A673 (cell line): ENCODE measurements at regions of chr16 and their contacts with region 1.

Region 1: DNA sequence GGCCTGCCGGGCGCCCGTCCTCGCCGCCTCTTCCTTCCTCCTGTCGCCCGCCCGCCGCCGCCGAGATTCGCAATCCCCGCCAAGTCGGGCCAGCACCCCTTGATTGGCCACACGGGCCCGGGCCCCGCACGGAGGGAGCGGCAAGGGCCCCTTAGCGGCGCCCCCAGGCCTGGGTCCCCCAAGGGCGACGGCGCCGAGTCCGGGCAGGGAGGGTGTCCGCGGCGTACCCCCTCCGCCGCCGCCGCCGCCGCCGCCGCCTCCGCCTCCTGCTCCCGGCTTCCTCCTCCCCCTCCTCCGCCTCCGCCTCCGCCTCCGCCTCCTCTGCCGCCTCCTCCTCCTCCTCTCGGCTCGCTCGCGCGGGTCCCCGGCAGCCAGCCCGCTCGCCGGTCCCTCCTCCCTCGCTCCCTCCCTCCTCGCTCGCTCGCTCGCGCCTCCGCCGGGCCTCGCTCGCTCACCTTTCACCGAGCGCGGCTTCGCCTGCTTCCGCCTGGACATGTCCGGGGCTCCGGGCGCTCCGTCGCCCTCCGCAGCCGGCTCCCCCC is 561 bp downstream of the ZNF423 start:
- DNase-seq: peak; percentile 87
- H3K4me3 ChIP-seq: peak overlapping the region; percentile 77
- H3K27ac ChIP-seq: peak overlapping the region; percentile 79
- H3K4me1 ChIP-seq: peaks cover 32% of the 10 kb centered on the region
- H3K27me3 ChIP-seq: no peaks in the 10 kb centered on the region
- CTCF ChIP-seq: no peak

Region 2: DNA sequence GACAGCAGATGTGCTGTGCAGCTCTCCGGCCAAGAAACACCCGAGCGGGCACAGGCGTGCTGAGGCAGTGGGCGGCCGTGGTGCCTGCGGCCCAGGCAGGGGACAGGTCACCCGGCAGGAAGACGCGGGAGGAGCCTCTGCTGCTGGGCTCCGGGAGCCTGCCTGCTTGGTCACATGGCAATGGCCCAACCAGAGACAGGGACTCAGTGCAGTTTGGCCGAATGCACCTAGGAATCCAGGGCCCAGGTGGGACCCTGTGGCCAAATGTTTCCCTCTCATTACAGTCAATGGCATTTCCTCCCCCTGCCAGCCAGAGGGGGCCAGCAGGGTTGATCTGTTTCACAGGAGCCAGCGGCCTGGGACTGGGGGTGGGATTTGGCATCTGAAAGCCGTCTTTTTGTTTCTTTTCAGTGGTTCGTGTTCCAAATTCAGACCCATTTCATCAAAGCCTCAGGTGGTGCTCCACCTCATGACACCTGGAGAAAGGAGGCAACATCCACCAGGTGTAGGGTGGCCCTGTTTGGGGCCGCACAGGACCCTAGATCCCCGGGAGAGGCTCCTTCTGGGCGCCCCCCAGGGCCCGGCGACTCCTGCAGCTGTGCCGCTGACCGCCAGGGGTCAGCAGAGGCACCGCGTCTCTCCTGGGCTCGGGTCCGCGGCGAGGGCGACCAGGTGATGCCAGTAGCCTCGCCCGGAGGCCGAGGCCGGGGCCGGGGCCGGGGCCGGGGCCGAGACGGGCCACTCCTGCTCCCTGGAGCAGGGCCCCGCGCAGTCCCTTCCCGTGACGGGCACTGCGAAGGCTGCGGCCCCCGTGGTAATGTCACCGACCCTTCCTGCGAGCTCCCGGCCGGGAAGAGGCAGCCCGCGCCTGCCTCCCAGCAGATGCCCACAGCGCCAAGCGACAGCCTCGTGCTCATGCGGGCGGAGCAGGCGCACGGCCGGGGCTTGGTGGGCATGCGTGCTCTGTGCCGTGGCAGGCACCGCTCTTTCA is 363.3 kb before region 1 on chr16:
- CTCF ChIA-PET with region 1: no interaction called
- POLR2A ChIA-PET with region 1: no interaction called
- intact Hi-C with region 1: loop called (anchors 5 kb)
- DNase-seq: peak; percentile 49
- H3K4me3 ChIP-seq: no peak overlapping the region
- H3K27ac ChIP-seq: no peak overlapping the region
- H3K4me1 ChIP-seq: peaks cover 12% of the 10 kb centered on the region
- H3K27me3 ChIP-seq: no peaks in the 10 kb centered on the region
- CTCF ChIP-seq: peak; percentile 88

Region 3: DNA sequence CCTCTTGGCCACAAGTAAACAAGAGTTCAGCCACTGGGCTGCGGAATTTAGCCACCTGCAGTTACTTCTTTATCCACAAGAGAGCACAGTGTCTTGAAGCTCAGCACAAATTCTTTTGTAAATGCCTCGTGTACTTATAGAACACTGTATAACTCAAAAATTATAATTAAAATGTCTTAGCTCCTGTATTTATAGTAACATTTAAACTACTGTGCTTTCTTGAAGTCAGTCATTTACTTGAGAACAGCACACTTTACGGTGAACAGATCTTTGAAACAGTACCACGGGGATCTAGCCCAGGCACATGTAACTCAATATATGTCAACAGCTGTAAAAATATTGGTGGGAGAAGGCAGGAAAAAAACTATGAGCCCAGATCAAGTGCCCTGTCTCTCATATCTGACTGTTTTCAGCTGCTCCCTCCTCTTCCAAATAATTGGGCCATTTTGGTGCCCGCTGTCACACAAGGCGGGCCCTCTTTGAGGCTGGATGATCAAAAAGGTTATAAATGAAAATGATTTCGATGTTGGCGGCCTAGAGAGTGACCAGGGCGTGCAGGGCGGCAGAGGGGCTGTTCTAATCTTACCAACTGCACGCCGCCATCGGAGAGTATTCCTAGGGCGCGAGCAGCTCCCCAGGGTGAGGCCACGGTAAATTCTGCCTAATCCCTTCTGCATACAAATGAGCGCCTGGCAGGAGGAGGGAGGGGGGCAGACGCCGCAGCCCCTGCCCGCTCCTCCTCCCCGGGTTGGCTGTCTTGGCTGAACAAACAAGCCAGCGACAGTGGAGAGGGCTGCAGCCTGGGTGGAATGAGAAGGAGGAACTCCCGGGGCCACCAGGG is 298.5 kb before region 1 on chr16:
- CTCF ChIA-PET with region 1: interaction called, 6 read pairs
- POLR2A ChIA-PET with region 1: no interaction called
- intact Hi-C with region 1: loop called (anchors 5 kb)
- DNase-seq: peak; percentile 82
- H3K4me3 ChIP-seq: peak overlapping the region; percentile 27
- H3K27ac ChIP-seq: peak overlapping the region; percentile 74
- H3K4me1 ChIP-seq: peaks cover 45% of the 10 kb centered on the region
- H3K27me3 ChIP-seq: no peaks in the 10 kb centered on the region
- CTCF ChIP-seq: peak; percentile 80

Region 4: GRCh38 chr16:49701789-49702494 is 153.4 kb before region 1 on chr16:
- CTCF ChIA-PET with region 1: interaction called, 3 read pairs
- POLR2A ChIA-PET with region 1: interaction called, 3 read pairs
- intact Hi-C with region 1: loop called (anchors 2 kb)
- DNase-seq: peak; percentile 99
- H3K4me3 ChIP-seq: peak overlapping the region; percentile 43
- H3K27ac ChIP-seq: peak overlapping the region; percentile 99
- H3K4me1 ChIP-seq: peaks cover 65% of the 10 kb centered on the region
- H3K27me3 ChIP-seq: no peaks in the 10 kb centered on the region
- CTCF ChIP-seq: no peak

Region 5: DNA sequence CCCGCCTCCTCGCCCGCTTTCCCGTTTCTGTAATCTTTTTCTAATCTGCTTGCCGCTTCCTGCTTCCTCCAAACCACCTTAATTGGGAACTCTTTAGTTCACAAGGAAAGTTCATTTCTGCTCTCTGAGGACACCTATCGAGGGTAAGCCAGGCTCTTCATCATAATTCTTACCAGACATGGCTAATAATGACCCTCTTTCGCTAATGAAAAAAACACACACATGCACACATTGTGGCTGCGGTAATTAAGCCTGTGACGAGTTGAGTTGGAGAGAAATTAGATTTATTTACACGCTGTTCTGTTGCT is 100.1 kb before region 1 on chr16:
- CTCF ChIA-PET with region 1: no interaction called
- POLR2A ChIA-PET with region 1: no interaction called
- intact Hi-C with region 1: loop called (anchors 5 kb)
- DNase-seq: peak; percentile 86
- H3K4me3 ChIP-seq: peak overlapping the region; percentile 31
- H3K27ac ChIP-seq: peak overlapping the region; percentile 78
- H3K4me1 ChIP-seq: peaks cover 18% of the 10 kb centered on the region
- H3K27me3 ChIP-seq: no peaks in the 10 kb centered on the region
- CTCF ChIP-seq: peak; percentile 68

Region 6: DNA sequence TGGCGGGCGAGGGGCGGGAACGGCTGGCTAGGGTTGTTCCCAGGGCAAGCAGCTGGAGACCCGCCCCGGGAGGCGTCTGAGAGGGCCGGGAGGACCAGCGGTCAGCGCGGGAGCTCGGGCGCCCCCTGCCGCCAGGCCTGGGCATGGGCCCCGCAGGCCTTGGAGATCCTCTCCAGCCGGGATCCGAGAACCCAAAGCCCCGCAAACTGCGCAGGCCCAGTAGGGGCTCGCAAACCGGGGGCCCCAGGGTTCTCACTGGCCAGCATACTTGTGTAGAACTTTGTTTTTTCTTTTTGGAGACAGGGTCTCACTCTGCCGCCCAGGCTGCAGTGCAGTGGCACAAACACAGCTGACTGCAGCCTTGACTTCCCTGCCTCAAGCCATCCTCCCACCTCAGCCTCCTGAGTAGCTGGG is 21.4 kb after region 1 on chr16:
- CTCF ChIA-PET with region 1: interaction called, 11 read pairs
- POLR2A ChIA-PET with region 1: interaction called, 6 read pairs
- intact Hi-C with region 1: no loop called
- DNase-seq: peak; percentile 78
- H3K4me3 ChIP-seq: peak overlapping the region; percentile 39
- H3K27ac ChIP-seq: peak overlapping the region; percentile 61
- H3K4me1 ChIP-seq: peaks cover 12% of the 10 kb centered on the region
- H3K27me3 ChIP-seq: no peaks in the 10 kb centered on the region
- CTCF ChIP-seq: peak; percentile 90